ENCODE measurements at regions of chr7 and their contacts with region 1.

Region 1: GRCh38 chr7:5494683-5495561 is 71.3 kb upstream of the TNRC18 start:
- DNase-seq: peak; percentile 89
- H3K4me3 ChIP-seq: peak overlapping the region; percentile 43
- H3K27ac ChIP-seq: peak overlapping the region; percentile 17; the same call in 1 of the 2 replicates
- H3K4me1 ChIP-seq: peaks cover 5% of the 10 kb centered on the region
- H3K27me3 ChIP-seq: no peaks in the 10 kb centered on the region

Region 2: GRCh38 chr7:4931943-4932342 is 563.0 kb before region 1 on chr7:
- in situ Hi-C with region 1: no loop called
- DNase-seq: no peak
- H3K4me3 ChIP-seq: no peak overlapping the region
- H3K27ac ChIP-seq: no peak overlapping the region
- H3K4me1 ChIP-seq: no peaks in the 10 kb centered on the region
- H3K27me3 ChIP-seq: no peaks in the 10 kb centered on the region

Region 3: DNA sequence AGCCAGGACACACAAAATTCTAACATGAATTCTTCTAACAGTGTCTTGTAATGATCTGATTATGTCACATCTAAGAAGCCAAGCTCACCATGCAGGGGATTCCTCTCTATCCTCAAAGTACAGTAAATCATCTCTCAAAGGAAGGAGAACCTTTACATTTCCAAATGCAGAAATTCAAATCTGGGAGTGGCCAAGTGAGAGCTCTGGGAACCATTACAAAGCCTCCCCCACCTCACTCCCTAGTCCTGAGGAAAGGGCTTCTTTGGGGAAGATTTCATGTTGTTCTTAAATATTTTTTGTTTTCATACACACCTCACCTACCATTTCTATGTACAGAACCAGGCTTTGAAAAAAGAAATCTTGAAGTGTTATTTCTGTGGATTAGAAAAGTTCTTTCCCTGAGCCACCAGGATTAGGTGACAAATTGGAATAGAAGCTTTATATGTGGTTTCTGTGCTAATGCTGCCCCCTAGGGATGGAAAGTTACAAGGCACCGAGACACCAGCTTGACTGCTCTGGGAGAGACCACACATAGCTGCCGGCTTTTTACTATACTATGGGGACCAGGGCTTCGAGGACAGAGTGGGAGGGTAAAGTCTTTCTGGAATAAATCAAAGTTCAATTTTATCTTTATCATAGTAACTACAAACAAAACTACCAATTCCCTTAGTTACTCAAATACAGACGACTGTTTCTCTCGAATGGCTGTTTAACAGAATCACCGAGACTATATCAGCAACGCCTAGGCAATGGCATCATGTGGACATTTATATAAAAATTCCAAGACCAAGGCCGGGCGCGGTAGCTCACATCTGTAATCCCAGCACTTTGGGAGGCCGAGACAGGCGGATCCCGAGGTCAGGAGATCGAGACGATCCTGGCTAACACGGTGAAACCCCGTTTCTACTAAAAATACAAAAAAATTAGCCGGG is 170.4 kb after region 1 on chr7:
- in situ Hi-C with region 1: loop called (anchors 10 kb)
- DNase-seq: peak; percentile 79
- H3K4me3 ChIP-seq: no peak overlapping the region
- H3K27ac ChIP-seq: no peak overlapping the region
- H3K4me1 ChIP-seq: no peaks in the 10 kb centered on the region
- H3K27me3 ChIP-seq: no peaks in the 10 kb centered on the region